ENCODE measurements at regions of chr6 and their contacts with region 1.

Region 1: DNA sequence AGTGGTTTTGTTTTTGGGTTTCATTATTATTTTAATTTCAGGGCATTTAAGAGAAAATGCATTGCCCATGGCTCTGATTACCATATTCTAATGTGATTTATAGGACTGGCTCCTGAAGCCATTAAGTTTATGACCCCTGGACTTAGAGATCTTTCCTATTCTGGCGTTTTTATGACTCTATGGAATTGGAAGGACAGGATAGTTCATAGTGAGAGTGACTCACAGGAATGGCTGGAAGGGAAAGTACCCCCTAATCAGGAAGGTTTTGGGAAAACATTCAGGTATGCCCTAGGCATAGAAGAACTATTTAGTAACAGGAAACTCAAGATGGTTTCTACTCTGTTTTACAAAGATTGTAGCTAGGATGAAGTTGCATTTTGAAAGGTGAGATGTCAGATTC is 108.6 kb upstream of the SLC2A12 start:
- DNase-seq: no peak

Region 2: DNA sequence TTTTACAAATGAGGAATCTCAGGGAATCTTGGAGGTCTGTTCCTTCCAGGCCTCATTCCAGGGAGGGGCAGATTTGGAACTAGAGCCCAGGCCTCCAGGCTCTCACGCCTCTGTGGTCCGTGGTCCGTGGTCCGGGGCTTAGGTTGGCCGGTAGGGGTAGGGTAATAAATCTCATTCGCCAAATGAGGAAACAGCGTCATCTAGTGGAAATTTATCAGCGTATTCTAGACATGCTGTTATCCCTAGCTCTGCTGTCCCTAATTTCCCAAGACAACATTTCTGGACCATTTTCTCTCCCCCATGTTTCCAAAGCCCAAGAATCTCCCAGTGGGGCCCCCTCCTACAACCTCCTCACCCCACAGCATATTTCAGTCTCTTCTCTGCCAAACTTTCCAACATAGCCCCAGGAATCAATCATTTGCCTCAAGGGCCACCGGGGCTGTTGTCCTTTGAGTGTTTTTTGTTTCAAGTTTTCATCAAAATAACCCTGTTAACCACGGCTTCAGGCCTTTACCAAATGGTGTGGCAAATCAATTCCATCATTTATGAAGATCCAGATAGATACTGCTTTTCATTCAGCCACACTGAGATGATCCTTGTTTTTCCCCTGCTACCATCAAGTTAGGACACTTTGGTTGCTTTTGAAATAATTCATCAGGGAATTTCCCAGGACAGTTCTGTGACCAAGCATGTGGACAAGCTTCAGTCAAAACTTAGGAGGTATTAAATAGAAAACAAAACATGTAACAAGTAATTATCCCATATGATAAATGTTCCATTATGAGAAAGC is 662.1 kb after region 1 on chr6:
- intact Hi-C with region 1: loop called in 1 of 2 experiments (anchors 5 kb)
- DNase-seq: no peak

Region 3: DNA sequence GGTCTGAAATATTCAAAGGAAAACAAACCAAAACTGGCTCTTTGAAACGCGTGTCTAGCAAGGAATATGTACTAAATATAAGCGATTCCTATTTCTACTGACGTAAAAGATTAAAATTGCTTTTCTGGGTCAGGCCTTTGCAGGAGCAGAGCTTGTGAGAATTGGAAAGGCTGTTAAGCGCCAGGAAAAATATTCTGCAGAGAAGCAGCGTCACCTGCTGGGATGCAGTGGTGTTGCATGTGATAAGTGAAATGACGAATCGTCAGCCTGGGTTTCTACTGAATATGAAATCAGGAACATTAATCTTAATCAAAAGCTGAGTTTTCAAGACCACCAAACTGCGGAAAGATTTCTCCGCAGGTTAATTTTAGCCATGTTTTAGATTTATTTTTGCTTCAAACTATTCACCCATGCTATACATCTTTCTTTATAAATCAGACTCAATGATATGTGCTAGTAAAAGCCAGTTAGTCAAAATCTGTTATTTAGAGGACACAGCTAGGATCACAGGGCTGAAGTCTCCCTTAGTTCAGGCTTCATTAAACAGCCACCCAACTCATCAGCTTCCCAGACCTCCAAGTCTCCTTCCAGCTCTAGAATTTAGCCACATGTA is 721.5 kb after region 1 on chr6:
- intact Hi-C with region 1: loop called (anchors 5 kb)
- DNase-seq: peak; percentile 87

Region 4: GRCh38 chr6:134938896-134939295 is 777.9 kb after region 1 on chr6:
- intact Hi-C with region 1: loop called (anchors 2 to 5 kb)
- DNase-seq: no peak

Measured in posterior vena cava (tissue), 2 donors.